SK-N-SH (cell line): ENCODE measurements at regions of chr7 and their contacts with region 1.

Region 1: GRCh38 chr7:151315038-151315655 is 26.5 kb upstream of the NUB1 start:
- DNase-seq: peak; percentile 90
- H3K4me3 ChIP-seq: no peak overlapping the region
- H3K27ac ChIP-seq: no peak overlapping the region
- H3K4me1 ChIP-seq: no peaks in the 10 kb centered on the region
- H3K27me3 ChIP-seq: no peaks in the 10 kb centered on the region
- CTCF ChIP-seq: peak; percentile 97
- EP300 ChIP-seq: no peak
- RAD21 ChIP-seq: peak; percentile 90

Region 2: DNA sequence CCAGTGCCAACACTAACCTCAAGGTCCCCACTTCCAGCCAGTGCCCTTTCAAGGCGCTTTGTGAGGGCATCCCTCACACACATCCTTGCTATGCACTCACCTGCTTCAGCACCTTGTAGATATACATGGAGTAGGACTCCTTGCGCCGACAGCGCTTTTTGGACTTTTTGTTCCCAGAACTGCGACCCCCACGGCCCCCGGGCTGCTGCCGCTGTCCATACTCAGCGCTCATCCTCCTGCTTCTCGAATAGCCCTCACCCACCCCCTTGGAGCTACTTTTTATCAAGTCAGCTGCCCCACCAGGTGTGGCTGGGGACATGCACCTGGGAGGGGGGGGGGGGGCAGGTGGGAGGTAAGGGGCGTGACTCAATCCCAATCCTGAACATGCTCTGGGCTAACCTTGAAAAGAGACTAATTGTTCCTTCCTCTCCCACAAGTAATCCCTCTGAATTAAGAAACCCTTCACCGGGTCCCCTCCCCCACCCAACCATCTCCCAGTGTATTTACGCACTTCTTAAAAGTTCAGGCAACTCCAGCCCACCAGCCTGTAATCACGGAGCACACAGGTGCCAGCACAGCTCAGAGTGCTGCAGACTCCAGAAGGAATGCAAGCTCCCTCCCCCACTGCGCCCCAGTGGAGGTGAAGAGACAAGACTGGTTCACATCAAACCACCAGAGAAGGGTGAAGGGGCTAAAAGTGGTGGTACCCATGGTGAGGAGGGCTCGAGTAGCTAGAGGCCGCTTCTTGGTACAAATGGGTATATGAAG is 104.9 kb before region 1 on chr7 and contains the start of gene H2BK1:
- CTCF ChIA-PET with region 1: no interaction called
- POLR2A ChIA-PET with region 1: no interaction called
- DNase-seq: no peak
- H3K4me3 ChIP-seq: no peak within 1 kb of the TSS
- H3K27ac ChIP-seq: no peak within 1 kb of the TSS
- H3K4me1 ChIP-seq: no peaks in the 10 kb centered on the region
- H3K27me3 ChIP-seq: peaks cover 16% of the 10 kb centered on the region; the same call in 1 of the 2 replicates
- CTCF ChIP-seq: no peak
- EP300 ChIP-seq: no peak
- RAD21 ChIP-seq: no peak
- polyA plus RNA-seq, gene H2BK1: not detected in 2 replicates

Region 3: DNA sequence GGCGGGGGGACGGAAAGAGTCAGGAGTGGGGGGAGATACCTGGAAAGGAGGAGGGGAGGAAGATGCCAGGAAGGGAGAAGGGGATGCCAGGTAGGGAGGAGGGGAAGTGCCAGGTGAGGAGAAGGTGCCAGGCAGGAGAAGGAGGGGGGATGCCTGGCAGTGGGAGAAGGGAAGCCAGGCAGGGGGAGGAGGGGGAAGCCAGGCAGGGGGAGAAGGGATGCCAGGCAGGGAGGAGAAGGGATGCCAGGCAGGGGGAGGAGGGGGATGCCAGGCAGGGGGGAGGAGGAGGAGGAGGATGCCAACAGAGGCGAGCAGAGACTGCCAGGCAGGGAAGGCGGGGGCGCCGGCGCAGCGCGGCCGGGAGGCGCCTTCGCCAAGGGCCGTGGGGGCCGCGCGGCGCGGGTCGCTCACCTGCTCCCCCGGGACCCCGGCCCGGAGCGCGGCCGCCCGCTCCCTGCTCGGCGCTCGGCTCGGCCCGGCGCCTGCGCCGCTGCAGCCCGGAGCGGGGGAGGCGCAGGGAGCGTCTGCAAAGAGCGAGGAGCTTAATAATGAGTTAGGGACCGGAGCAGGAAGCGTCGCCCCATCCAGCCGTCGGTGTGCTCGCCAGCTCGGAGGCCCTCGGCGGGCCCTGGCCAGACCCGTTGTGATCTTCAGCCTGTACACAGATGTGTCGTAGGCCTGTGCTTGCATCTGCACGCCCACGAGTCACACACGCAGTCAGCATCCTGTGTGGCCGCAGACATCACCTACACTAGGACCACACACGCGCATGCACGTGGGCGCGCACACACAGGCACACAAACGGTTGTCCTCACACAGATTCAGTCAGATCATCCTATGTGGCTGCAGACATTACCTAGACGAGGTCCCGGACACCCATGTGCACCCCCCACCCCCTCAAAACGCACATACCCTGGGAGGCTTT is 38.2 kb before region 1 on chr7:
- CTCF ChIA-PET with region 1: interaction called, 11 read pairs
- POLR2A ChIA-PET with region 1: no interaction called
- DNase-seq: peak; percentile 98
- H3K4me3 ChIP-seq: peak overlapping the region; percentile 55 to 59
- H3K27ac ChIP-seq: peak overlapping the region in 1 of 2 experiments; percentile 35; a peak in 1 of 4 replicates
- H3K4me1 ChIP-seq: peaks cover 0 to 12% of the 10 kb centered on the region in 2 experiments; a peak in 1 of 4 replicates
- H3K27me3 ChIP-seq: no peaks in the 10 kb centered on the region
- CTCF ChIP-seq: no peak
- EP300 ChIP-seq: no peak
- RAD21 ChIP-seq: no peak

Region 4: DNA sequence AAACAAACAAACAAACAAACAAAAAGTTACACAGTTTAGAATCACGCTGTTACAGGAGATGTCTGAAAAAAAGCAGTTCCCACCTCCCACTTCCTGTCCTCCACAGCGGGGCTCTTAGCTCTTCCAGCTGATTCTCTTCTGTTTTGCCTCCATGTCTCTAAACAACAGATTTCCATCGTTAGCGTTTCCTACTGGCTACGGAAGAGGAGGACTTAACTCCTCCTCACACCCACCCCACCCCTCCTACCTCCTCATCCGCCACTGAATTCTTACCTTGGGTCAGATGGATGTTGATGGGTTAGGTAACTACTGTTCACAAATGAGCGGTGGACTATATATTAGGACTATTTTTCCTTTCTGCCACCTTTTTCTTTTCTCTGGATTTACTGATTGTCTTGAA is 10.3 kb before region 1 on chr7:
- CTCF ChIA-PET with region 1: interaction called, 86 read pairs
- POLR2A ChIA-PET with region 1: no interaction called
- DNase-seq: no peak
- H3K4me3 ChIP-seq: no peak overlapping the region
- H3K27ac ChIP-seq: no peak overlapping the region
- H3K4me1 ChIP-seq: peaks cover 0 to 3% of the 10 kb centered on the region in 2 experiments; a peak in 1 of 4 replicates
- H3K27me3 ChIP-seq: peaks cover 38% of the 10 kb centered on the region
- CTCF ChIP-seq: no peak
- EP300 ChIP-seq: no peak
- RAD21 ChIP-seq: no peak

Region 5: DNA sequence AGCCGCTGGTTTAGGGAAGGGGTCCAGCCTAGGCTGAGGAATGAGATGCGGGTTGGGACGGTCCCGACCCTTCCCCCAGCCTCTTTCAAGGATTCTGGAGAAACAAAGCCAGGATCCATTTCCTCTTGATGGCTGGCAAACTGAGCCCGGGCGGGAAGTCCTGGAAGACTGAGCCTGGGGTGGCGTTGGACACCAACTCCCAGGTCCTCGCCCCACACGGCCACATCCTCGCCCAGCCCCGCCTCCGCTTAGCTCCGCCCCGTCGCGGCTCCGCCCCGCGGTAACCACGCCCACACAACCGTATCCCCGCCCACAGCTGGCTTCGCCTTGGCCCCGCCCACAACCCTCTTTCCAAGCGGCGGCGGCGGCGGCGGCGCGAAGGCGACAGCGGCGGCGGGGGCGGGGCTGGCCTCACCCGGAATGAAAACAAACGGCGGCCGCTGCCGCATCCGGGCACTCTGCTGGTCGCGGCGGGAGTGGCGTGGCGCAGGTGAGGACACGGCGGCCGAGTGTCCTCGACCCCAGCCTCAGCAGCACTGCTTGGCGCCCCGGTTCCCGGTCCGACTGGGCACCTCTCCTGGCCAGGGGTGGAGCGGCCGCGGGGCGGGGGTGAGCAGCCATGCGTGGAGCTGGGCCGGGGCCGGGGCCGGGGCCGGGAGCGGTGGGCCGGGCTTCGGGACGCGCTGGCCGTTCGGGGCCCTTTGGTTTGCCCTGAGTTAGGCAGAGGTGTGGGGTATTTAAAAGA is 26.4 kb after region 1 on chr7 and contains the start of gene NUB1:
- CTCF ChIA-PET with region 1: interaction called, 84 read pairs
- POLR2A ChIA-PET with region 1: interaction called, 3 read pairs
- DNase-seq: peak; percentile 99
- H3K4me3 ChIP-seq: peak within 1 kb of the TSS; percentile 81 to 93
- H3K27ac ChIP-seq: peak within 1 kb of the TSS; percentile 38 to 56; a peak in 3 of 4 replicates
- H3K4me1 ChIP-seq: peaks cover 15 to 17% of the 10 kb centered on the region in 2 experiments
- H3K27me3 ChIP-seq: no peaks in the 10 kb centered on the region
- CTCF ChIP-seq: no peak
- EP300 ChIP-seq: no peak
- RAD21 ChIP-seq: no peak
- polyA plus RNA-seq, gene NUB1: 54.0 and 56.6 TPM in 2 replicates

Region 6: GRCh38 chr7:151361193-151361959 is 46.2 kb after region 1 on chr7:
- CTCF ChIA-PET with region 1: interaction called, 237 read pairs
- POLR2A ChIA-PET with region 1: no interaction called
- DNase-seq: no peak
- H3K4me3 ChIP-seq: no peak overlapping the region
- H3K27ac ChIP-seq: no peak overlapping the region
- H3K4me1 ChIP-seq: no peaks in the 10 kb centered on the region; a peak in 1 of 4 replicates
- H3K27me3 ChIP-seq: no peaks in the 10 kb centered on the region
- CTCF ChIP-seq: no peak
- EP300 ChIP-seq: no peak
- RAD21 ChIP-seq: no peak

Region 7: GRCh38 chr7:151386301-151387132 is 71.4 kb after region 1 on chr7:
- CTCF ChIA-PET with region 1: no interaction called
- POLR2A ChIA-PET with region 1: no interaction called
- DNase-seq: no peak
- H3K4me3 ChIP-seq: no peak overlapping the region
- H3K27ac ChIP-seq: peak overlapping the region in 1 of 2 experiments; percentile 1; a peak in 1 of 4 replicates
- H3K4me1 ChIP-seq: peaks cover 0 to 7% of the 10 kb centered on the region in 2 experiments; a peak in 1 of 4 replicates
- H3K27me3 ChIP-seq: peaks cover 22% of the 10 kb centered on the region
- CTCF ChIP-seq: no peak
- EP300 ChIP-seq: no peak
- RAD21 ChIP-seq: no peak

Region 8: GRCh38 chr7:151439855-151440798 is 125.0 kb after region 1 on chr7 and contains the start of gene CRYGN:
- CTCF ChIA-PET with region 1: interaction called, 13 read pairs
- POLR2A ChIA-PET with region 1: no interaction called
- DNase-seq: peak; percentile 78
- H3K4me3 ChIP-seq: peak within 1 kb of the TSS in 1 of 2 experiments; percentile 19; a peak in 1 of 4 replicates
- H3K27ac ChIP-seq: no peak within 1 kb of the TSS
- H3K4me1 ChIP-seq: peaks cover 0 to 20% of the 10 kb centered on the region in 2 experiments; a peak in 2 of 4 replicates
- H3K27me3 ChIP-seq: no peaks in the 10 kb centered on the region; the same call in 1 of the 2 replicates
- CTCF ChIP-seq: no peak
- EP300 ChIP-seq: no peak
- RAD21 ChIP-seq: no peak
- polyA plus RNA-seq, gene CRYGN: not detected in 2 replicates